Astrocyte of the cerebellum (primary cell): ENCODE measurements at regions of chr15 and their contacts with region 1.

Region 1: DNA sequence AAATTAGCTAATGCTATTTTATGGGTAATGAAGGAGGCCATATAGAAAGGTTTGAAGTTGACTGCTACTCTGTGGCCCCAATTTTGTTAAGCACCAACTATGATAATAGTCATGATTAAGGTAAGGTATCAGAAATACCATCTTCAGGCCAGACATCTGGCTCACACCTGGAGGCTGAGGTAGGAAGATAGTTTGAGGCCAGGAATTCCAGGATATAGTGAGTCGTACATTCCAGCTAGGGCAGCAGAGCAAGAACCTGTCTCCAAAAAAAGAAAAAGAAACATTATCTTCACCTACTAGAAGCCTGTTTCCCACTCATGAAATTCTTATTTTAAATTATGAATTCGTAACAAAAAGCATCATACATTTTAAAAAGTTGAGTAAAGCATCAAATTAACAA is 64.4 kb downstream of the LRRC28 start:
- DNase-seq: no peak
- H3K4me3 ChIP-seq: no peak overlapping the region
- CTCF ChIP-seq: no peak

Region 2: DNA sequence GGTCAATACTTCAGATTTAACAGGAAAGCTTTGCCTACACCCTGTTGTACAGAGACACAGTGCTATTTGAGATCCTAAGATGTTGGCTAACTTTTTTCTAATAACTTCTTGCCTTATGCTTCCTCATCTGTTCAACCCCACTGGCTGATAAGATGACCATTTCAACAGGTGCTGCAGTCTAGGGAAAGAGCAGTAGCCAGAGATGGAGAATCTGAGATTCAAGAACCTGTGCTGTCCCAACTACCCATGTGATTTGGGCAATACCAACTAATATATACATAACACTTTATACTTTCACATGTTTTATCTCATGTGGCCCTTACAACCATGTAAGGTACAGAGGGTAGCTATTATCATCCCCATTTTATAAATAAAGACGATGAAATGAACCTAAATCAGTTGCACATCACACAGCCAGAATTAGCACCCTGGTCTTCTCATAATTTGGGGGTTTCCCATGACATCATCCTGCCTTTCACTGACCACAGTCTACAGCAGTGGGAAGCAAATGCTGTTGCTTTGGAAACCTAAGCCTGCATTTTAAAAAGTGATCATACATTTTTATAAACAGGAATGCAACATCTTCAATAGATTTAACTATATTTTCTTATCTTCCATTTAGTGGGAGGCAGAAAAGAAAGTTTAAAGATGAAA is 76.0 kb before region 1 on chr15:
- in situ Hi-C with region 1: no loop called
- DNase-seq: no peak
- H3K4me3 ChIP-seq: no peak overlapping the region
- CTCF ChIP-seq: no peak

Region 3: GRCh38 chr15:99257107-99257750 is 58.4 kb before region 1 on chr15:
- in situ Hi-C with region 1: loop called (anchors 5 kb)
- DNase-seq: no peak
- H3K4me3 ChIP-seq: no peak overlapping the region
- CTCF ChIP-seq: no peak